Activated naive CD4-positive, alpha-beta T cell treated with anti-CD3 and anti-CD28 coated beads for 36 hours (primary cell): ENCODE measurements at regions of chr10 and their contacts with region 1.

Region 1: DNA sequence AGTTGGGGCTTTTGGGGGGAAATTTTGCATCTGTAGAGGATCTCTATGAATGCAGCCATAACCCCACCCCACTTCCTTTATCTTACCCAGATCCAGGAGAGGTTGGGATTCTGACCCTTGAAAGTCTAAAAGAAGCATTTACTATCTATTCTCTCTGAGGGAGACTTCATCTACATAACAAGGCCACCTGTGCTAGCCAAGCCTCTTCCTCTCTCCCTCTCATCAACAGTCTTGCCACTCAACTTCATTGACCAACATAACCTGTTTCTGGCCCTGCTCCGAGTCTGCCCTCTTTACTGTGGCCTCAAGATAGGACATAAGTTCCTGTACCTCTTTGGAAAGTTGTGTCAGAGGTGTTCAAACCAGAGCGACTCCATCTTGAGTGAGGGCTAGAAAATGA is 19.4 kb downstream of the TUBAL3 start:
- DNase-seq: no peak
- H3K4me3 Mint-ChIP-seq: no peak overlapping the region
- H3K27ac Mint-ChIP-seq: no peak overlapping the region
- H3K4me1 Mint-ChIP-seq: no peaks in the 10 kb centered on the region
- H3K27me3 Mint-ChIP-seq: no peaks in the 10 kb centered on the region

Region 2: DNA sequence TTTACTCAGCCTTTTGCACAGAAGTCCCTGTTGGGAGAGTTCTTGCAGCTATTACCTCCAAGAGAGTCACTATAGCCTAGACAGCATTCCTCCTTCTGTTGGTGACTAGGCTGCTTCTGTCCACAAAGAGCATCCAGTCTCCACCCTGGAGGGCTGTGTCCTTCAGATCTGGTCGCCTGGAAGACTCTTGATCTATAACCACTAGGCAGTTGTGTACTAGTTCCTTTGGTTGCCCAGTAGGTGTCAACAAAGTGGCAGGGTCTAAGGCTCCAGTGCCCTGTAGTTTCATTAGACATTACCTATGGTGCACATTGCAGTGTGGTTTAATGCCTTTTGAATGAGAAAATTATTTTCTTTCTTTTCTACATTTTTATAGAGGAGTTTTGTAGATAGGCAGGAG is 370.3 kb before region 1 on chr10:
- CTCF ChIA-PET with region 1: no interaction called
- intact Hi-C with region 1: loop called (anchors 10 kb)
- DNase-seq: peak; percentile 15
- H3K4me3 Mint-ChIP-seq: no peak overlapping the region
- H3K27ac Mint-ChIP-seq: no peak overlapping the region
- H3K4me1 Mint-ChIP-seq: no peaks in the 10 kb centered on the region
- H3K27me3 Mint-ChIP-seq: no peaks in the 10 kb centered on the region

Region 3: GRCh38 chr10:5094265-5095205 is 290.7 kb before region 1 on chr10 and contains the start of gene AKR1C3:
- CTCF ChIA-PET with region 1: no interaction called
- intact Hi-C with region 1: loop called (anchors 5 kb)
- DNase-seq: no peak
- H3K4me3 Mint-ChIP-seq: peak within 1 kb of the TSS; percentile 55
- H3K27ac Mint-ChIP-seq: no peak within 1 kb of the TSS
- H3K4me1 Mint-ChIP-seq: peaks cover 9% of the 10 kb centered on the region
- H3K27me3 Mint-ChIP-seq: peaks cover 2% of the 10 kb centered on the region
- total RNA-seq, gene AKR1C3: 0.33 to 0.47 TPM

Region 4: DNA sequence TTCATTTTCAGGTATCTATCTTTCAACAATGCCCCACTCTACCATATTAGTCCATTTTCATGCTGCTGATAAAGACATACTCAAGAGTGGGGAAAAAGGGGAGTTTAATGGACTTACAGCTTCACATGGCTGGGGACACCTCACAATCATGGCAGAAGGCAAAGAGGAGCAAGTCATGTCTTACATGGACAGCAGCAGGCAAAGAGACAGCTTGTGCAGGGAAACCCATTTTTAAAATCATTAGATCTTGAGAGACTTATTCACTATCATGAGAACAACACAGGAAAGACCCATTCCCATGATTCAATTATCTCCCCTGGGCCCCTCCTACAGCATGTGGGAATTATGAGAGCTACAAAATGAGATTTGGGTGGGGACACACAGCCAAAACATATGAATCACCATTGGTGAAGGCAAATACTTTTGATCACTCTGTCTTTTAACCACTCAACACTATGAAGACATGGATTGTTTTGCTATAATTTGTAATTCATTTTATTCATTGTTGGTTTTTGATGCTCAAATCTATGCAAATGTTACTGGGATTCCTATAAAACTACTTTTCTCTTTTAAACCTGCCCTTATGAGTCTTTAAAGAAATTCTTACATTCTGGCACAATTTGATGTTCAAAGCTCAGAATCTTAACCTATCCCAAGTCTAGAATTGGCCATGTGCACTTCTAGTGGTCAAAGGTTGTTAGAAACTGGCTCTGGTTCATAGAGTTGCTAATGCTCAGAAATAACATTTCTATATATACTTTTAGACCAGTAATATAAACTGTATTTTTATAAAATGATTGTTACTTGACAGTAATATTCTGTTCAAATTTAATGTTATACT is 173.3 kb before region 1 on chr10:
- CTCF ChIA-PET with region 1: no interaction called
- intact Hi-C with region 1: loop called (anchors 10 kb)
- DNase-seq: no peak
- H3K4me3 Mint-ChIP-seq: no peak overlapping the region
- H3K27ac Mint-ChIP-seq: no peak overlapping the region
- H3K4me1 Mint-ChIP-seq: no peaks in the 10 kb centered on the region
- H3K27me3 Mint-ChIP-seq: peaks cover 2% of the 10 kb centered on the region